ENCODE measurements at regions of chr15 and their contacts with region 1.

Region 1: GRCh38 chr15:75029378-75030022 is 6.1 kb downstream of the PPCDC start:
- DNase-seq: peak; percentile 83 to 90
- H3K4me3 ChIP-seq: no peak overlapping the region
- H3K4me3 Mint-ChIP-seq: no peak overlapping the region
- H3K27ac Mint-ChIP-seq: peak overlapping the region; percentile 16
- H3K4me1 ChIP-seq: peaks cover 38% of the 10 kb centered on the region
- H3K4me1 Mint-ChIP-seq: peaks cover 15% of the 10 kb centered on the region
- H3K27me3 ChIP-seq: no peaks in the 10 kb centered on the region
- H3K27me3 Mint-ChIP-seq: no peaks in the 10 kb centered on the region
- CTCF ChIP-seq: peak; percentile 88 to 91

Region 2: GRCh38 chr15:75008629-75009326 is 20.7 kb before region 1 on chr15:
- CTCF ChIA-PET with region 1: no interaction called
- POLR2A ChIA-PET with region 1: no interaction called
- intact Hi-C with region 1: no loop called
- DNase-seq: no peak
- H3K4me3 ChIP-seq: no peak overlapping the region
- H3K4me3 Mint-ChIP-seq: no peak overlapping the region
- H3K27ac Mint-ChIP-seq: no peak overlapping the region
- H3K4me1 ChIP-seq: no peaks in the 10 kb centered on the region
- H3K4me1 Mint-ChIP-seq: no peaks in the 10 kb centered on the region
- H3K27me3 ChIP-seq: no peaks in the 10 kb centered on the region
- H3K27me3 Mint-ChIP-seq: no peaks in the 10 kb centered on the region
- CTCF ChIP-seq: no peak

Region 3: DNA sequence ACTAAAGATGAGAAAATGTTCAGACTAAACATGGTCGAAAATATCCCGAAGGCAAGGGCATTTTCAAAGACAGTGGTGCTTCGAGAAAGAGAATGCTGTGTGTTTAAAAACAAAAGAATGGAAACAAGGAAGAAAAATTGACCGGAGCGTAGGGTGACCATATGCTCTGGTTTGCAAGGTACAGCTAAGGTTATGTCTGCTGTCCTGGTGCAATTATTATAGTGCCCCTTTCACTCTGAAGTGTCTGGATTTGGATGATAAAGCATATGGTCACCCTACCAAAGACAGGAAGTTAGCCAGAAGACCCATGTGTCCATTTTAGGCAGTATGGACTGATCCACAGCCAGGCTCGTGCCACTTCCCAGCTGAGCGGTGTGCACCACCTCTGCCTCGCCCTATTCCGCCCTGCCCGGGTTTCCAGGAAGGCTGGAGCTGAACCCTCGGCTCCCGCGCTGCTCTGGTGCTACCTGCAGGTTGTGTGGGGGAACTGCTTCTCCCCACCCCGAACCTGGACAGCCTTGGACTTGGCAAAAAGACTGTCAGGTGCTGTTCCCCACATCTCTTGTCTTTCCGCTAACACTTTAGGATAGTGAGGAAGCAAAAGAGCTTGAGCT is 278.4 kb after region 1 on chr15:
- CTCF ChIA-PET with region 1: interaction called, 3 read pairs
- POLR2A ChIA-PET with region 1: no interaction called
- intact Hi-C with region 1: loop called (anchors 2 kb)
- DNase-seq: peak; percentile 74 to 76
- H3K4me3 ChIP-seq: no peak overlapping the region
- H3K4me3 Mint-ChIP-seq: peak overlapping the region; percentile 1
- H3K27ac Mint-ChIP-seq: no peak overlapping the region
- H3K4me1 ChIP-seq: no peaks in the 10 kb centered on the region
- H3K4me1 Mint-ChIP-seq: no peaks in the 10 kb centered on the region
- H3K27me3 ChIP-seq: no peaks in the 10 kb centered on the region
- H3K27me3 Mint-ChIP-seq: peaks cover 35% of the 10 kb centered on the region
- CTCF ChIP-seq: peak; percentile 70 to 71

Measured in Caco-2 (cell line).